A549 (cell line): ENCODE measurements at regions of chr1 and their contacts with region 1.

Region 1: DNA sequence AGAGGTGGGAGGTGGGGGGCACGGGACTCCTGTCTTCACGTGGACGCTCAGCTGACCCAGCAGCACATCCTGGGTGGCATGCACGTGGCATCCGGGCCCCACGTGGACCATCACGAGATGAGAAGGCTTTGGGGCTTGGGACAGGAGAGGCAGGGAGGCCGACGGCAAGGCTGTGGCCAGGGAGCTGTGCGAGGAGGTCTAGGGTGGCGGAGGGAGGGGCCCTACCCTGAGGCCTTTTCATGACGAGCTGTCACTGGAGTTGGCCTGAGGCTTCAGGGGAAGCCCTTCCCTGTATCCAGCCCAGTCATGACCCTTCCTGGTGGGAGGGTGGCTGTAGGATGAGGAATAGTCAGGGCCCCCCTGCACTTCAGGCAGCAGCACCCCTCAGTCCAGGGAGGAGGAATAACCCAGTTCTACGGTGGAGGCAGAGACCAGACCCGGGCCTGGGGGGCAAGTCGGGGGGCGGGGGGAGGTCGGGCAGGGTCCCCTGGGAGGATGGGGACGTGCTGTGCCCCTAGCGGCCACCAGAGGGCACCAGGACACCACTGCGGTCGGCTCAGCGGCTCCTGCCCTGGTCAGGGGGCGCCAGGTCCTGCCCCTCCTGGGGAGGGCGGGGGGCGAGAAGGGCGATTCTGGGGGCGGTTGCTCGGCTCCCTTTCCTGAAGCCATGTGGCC is 2.0 kb upstream of the PERM1 start:
- DNase-seq: no peak
- ATAC-seq: peak; percentile 64 to 79; a peak in 5 of 6 replicates
- H3K4me3 ChIP-seq: 0 out of 3 replicates have a peak overlapping the region, but pooled peaks have one; percentile 12
- H3K27ac ChIP-seq: peak overlapping the region in 1 of 2 experiments; percentile 68; a peak in 3 of 6 replicates
- H3K4me1 ChIP-seq: no peaks in the 10 kb centered on the region
- CTCF ChIP-seq: peak; percentile 78
- EP300 ChIP-seq: no peak
- POLR2A ChIP-seq: no peak
- RAD21 ChIP-seq: peak; percentile 74 to 92

Region 2: DNA sequence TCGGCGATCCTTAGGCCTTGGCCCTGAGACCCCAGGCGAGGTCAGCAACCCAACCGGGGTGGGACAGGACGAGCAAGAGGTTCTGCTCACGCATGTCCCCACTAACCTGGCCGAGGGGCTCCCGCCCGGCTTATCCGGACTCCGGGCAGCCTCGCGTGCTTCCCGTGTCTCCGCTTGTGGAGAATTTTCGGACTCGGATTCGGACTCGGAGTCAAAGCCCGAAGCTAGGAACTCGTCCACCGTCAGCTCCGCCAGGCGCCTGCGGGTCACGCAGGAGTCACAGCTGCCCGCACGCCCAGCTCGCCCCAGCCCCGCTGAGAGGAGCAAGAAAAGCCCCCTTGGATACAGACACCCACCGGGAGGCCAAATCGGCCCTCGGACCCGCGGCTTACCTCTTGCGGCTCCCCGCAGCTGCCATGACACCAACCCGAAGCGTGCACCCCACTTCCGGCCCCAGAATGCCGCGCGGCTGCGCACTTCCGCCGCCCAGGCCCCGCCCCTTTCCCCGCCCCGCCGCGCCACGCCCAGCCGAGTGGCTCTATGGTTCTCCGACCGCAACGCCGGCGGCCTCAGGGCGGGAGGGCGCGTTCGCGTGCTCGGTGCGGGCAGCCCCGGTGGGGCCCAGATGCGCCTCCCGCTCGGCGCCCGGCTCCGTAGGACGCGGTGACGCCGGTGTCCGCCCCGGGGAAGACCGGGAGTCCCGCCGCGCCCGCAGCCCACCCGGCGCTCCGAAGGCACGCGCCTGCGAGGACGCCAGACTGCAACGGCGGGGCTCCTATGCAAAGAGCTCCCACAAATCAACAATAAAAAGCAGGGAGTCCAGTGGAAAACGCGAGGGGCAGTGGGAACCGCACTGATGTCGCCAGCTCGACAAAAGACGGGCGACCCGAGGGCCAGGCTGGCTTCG is 24.9 kb before region 1 on chr1 and contains the start of gene NOC2L:
- CTCF ChIA-PET with region 1: no interaction called
- POLR2A ChIA-PET with region 1: no interaction called
- DNase-seq: peak in 1 of 2 experiments; percentile 86
- ATAC-seq: peak; percentile 65 to 91
- H3K4me3 ChIP-seq: peak within 1 kb of the TSS; percentile 84
- H3K27ac ChIP-seq: peak within 1 kb of the TSS; percentile 89 to 93
- H3K4me1 ChIP-seq: peaks cover 13% of the 10 kb centered on the region; the same call in 2 of the 3 replicates
- CTCF ChIP-seq: no peak
- EP300 ChIP-seq: no peak
- POLR2A ChIP-seq: peak; percentile 51
- RAD21 ChIP-seq: no peak
- polyA plus RNA-seq, gene NOC2L: 41.0 and 48.4 TPM in 2 replicates

Region 3: GRCh38 chr1:999725-1000356 is 15.9 kb after region 1 on chr1 and contains the start of gene HES4:
- CTCF ChIA-PET with region 1: interaction called, 52 read pairs
- POLR2A ChIA-PET with region 1: no interaction called
- DNase-seq: peak in 1 of 2 experiments; percentile 92
- ATAC-seq: peak; percentile 51 to 52
- H3K4me3 ChIP-seq: peak within 1 kb of the TSS; percentile 77
- H3K27ac ChIP-seq: peak within 1 kb of the TSS; percentile 97 to 100
- H3K4me1 ChIP-seq: peaks cover 17% of the 10 kb centered on the region
- CTCF ChIP-seq: no peak
- EP300 ChIP-seq: no peak
- POLR2A ChIP-seq: peak; percentile 86
- RAD21 ChIP-seq: no peak
- polyA plus RNA-seq, gene HES4: 4.2 and 5.9 TPM in 2 replicates

Region 4: DNA sequence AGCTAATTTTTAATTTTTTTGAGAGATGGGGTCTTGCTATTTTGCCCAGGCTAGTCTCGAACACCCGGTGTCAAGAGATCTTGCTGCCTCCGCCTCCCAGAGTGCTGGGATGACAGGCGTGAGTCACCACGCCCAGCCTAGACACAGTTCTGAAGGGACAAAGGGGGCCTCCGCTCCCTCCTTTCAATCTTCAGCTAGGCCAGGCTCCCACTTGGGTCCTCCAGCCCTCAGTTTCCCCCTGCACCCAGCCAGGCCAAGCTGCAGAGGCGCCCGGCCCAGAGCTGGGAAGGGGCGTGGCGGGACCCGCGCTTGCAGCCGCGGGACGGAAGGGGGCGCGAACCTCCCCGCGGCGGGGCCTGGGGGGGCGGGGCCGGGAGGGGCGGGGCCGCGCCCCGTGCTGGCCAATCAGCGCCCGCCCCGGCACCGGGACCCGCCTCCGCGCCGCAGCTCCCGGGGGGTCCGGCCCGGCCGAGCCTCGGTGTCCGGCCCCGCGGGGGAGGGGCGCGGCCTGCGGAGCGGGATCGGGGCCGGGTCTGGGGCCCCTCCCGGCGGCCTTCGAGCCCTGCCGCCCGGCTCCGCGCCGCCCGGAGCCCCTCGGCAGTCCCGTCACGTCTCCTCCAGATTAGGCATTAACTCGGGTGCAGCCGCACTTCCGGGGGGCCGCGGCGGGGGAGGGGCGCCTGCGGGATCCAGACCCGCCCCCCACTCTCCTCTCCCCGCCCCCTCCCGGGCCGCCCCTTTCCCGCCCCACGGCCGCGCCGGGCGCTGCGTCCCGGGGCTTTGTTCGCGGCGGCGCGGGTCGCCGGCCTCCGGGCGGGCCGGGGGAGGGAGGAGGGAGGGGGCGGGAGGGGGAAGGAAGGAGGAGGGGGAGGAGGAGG is 35.4 kb after region 1 on chr1:
- CTCF ChIA-PET with region 1: interaction called, 36 read pairs
- POLR2A ChIA-PET with region 1: no interaction called
- DNase-seq: peak in 1 of 2 experiments; percentile 87
- ATAC-seq: peak; percentile 59
- H3K4me3 ChIP-seq: peak overlapping the region; percentile 86
- H3K27ac ChIP-seq: peak overlapping the region; percentile 98
- H3K4me1 ChIP-seq: peaks cover 33% of the 10 kb centered on the region
- CTCF ChIP-seq: peak; percentile 42; the same call in 2 of the 3 replicates
- EP300 ChIP-seq: peak in 1 of 2 experiments; percentile 30; a peak in 1 of 5 replicates
- POLR2A ChIP-seq: no peak
- RAD21 ChIP-seq: no peak; a peak in 1 of 5 replicates

Region 5: GRCh38 chr1:1291548-1292441 is 307.9 kb after region 1 on chr1:
- CTCF ChIA-PET with region 1: interaction called, 29 read pairs
- POLR2A ChIA-PET with region 1: no interaction called
- DNase-seq: peak in 1 of 2 experiments; percentile 69
- ATAC-seq: peak; percentile 62 to 89; a peak in 5 of 6 replicates
- H3K4me3 ChIP-seq: no peak overlapping the region
- H3K27ac ChIP-seq: no peak overlapping the region
- H3K4me1 ChIP-seq: no peaks in the 10 kb centered on the region
- CTCF ChIP-seq: peak; percentile 37
- EP300 ChIP-seq: no peak
- POLR2A ChIP-seq: no peak
- RAD21 ChIP-seq: peak; percentile 57 to 58